Sigmoid colon (tissue), 7 donors: ENCODE measurements at regions of chr12 and their contacts with region 1.

Region 1: GRCh38 chr12:93502802-93503623 is 35.7 kb downstream of the MRPL42 start:
- DNase-seq: no peak
- H3K4me3 ChIP-seq: no peak overlapping the region
- H3K27ac ChIP-seq: no peak overlapping the region
- H3K4me1 ChIP-seq: no peaks in the 10 kb centered on the region
- H3K27me3 ChIP-seq: no peaks in the 10 kb centered on the region
- CTCF ChIP-seq: peak; percentile 48 to 78 (median 74)
- EP300 ChIP-seq: no peak
- POLR2A ChIP-seq: no peak

Region 2: DNA sequence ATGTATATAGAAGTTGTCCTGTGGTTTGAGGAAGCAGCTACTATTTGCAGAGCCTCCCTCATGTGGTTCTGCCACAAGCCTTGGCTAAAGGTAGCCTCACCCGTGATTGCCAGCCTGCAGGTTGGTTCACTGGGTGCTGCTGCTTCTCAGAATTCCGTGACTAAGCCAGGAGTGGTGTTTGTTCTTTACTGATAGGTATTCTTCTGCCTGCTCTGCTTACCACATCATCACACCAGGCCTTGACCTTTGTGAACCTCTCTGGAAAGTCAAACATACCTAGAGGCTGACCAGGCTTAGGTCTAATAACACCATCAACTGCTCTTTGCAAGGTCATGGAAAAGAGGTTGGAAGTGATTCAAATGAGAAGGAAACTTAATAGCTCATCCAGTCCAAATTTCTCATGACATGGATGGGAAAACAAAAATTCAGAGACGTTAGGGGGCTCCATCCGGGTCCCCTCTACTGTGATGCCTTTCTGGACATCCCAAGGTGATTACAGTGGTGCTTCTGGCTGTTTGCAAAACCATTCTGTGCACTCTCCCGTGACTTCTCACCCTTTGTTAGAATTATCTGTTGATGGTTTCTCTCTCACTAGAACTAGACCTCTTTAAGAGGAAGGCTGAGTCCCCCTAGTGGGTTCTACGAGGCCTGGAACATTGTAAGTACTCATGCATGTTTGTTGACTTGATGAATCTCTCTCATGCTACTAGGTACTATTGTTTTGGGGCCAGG is 61.0 kb after region 1 on chr12:
- intact Hi-C with region 1: loop called (anchors 2 kb)
- DNase-seq: no peak
- H3K4me3 ChIP-seq: no peak overlapping the region
- H3K27ac ChIP-seq: no peak overlapping the region
- H3K4me1 ChIP-seq: peaks cover 0 to 2% (median under 1%) of the 10 kb centered on the region in 4 donors
- H3K27me3 ChIP-seq: no peaks in the 10 kb centered on the region
- CTCF ChIP-seq: no peak
- EP300 ChIP-seq: no peak
- POLR2A ChIP-seq: no peak

Region 3: GRCh38 chr12:93847517-93848474 is 344.8 kb after region 1 on chr12:
- intact Hi-C with region 1: loop called (anchors 10 kb)
- DNase-seq: no peak
- H3K4me3 ChIP-seq: no peak overlapping the region
- H3K27ac ChIP-seq: peak overlapping the region in 1 of 4 donors; percentile 19
- H3K4me1 ChIP-seq: no peaks in the 10 kb centered on the region
- H3K27me3 ChIP-seq: no peaks in the 10 kb centered on the region
- CTCF ChIP-seq: no peak
- EP300 ChIP-seq: no peak
- POLR2A ChIP-seq: no peak